Left lung (tissue), 14 donors: ENCODE measurements at regions of chr13 and their contacts with region 1.

Region 1: GRCh38 chr13:113930671-113931637 is 42.9 kb downstream of the C13orf46 start:
- DNase-seq: peak in 1 of 4 donors; percentile 29
- ATAC-seq: no peak
- H3K4me3 ChIP-seq: no peak overlapping the region
- H3K27ac ChIP-seq: no peak overlapping the region
- H3K4me1 ChIP-seq: peaks cover 4 to 7% of the 10 kb centered on the region in 2 donors
- H3K27me3 ChIP-seq: peaks cover 0 to 48% of the 10 kb centered on the region in 2 donors
- CTCF ChIP-seq: no peak

Region 2: DNA sequence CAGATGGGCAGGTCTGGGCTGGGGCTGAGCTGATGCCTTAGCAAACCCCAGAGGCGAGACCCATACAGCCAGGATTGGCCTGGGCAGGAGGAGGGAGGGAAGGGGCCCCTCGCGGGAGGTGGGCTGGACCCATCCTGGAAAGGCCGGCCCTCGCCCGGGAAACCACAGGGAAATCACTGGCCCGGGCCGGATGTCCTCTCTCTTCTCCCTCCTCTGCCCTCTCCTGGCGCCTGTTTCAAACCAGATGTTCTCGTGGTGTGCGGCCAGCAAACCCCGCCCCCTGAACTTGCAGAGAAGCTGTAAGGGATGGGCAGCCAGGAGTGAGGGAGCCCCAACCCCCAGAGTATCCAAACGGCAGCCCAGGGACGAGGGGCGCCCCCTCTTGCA is 128.8 kb before region 1 on chr13:
- intact Hi-C with region 1: loop called in 1 of 2 experiments (anchors 10 kb)
- DNase-seq: peak; percentile 48 to 87 (median 78)
- ATAC-seq: peak; percentile 59
- H3K4me3 ChIP-seq: no peak overlapping the region
- H3K27ac ChIP-seq: no peak overlapping the region
- H3K4me1 ChIP-seq: peaks cover 0 to 7% of the 10 kb centered on the region in 2 donors
- H3K27me3 ChIP-seq: no peaks in the 10 kb centered on the region
- CTCF ChIP-seq: no peak